Mammary epithelial cell (primary cell): ENCODE measurements at regions of chr11 and their contacts with region 1.

Region 1: DNA sequence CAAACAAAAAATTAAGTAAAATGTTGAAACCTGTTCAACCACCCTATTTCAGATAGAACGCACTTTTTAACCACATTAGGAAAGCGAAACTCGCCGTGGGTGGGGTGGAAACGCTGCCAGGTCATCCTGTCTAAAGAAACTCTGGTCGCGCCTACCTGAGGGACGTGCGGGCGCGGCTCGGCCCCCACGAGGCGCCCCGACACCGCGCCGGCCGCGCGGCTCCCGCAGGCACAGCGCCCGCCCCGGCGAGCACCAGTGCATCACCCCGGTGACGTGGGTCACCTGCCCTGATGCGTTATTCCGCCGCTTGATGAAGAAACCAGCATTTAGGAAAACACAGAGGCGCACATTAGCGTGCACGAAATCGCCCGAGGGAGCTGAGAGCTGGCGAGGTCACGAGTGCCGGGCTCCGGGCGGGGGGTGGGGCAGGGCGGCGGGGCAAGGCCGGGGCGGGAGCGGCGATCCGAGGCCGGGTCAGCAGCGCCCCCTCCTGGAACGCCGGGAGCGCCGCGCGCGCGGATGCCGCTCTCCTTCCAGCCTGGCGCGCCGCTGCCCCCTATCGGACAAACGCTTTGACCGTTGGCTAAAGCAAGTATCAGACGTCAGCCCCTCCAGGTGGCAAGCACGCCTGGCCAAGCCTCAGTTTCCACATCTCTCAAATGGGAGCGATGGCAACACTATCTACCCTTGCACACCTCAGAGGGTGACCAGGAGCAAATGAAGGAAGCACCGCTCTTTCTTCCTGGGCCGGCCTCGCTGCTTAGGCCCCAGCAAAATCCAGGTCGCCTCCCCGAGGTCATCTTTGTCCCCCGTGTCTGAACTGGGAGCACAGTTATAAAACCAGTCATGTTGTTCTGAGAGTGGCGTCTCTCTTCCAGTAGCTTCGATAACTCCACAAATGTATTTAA is 15.7 kb upstream of the SNX32 start:
- DNase-seq: peak; percentile 82
- H3K4me3 ChIP-seq: peak overlapping the region; percentile 61 to 70 (median 64)
- H3K27ac ChIP-seq: peak overlapping the region; percentile 85
- H3K4me1 ChIP-seq: peaks cover 7% of the 10 kb centered on the region
- H3K27me3 ChIP-seq: no peaks in the 10 kb centered on the region
- CTCF ChIP-seq: peak; percentile 88 to 97

Region 2: DNA sequence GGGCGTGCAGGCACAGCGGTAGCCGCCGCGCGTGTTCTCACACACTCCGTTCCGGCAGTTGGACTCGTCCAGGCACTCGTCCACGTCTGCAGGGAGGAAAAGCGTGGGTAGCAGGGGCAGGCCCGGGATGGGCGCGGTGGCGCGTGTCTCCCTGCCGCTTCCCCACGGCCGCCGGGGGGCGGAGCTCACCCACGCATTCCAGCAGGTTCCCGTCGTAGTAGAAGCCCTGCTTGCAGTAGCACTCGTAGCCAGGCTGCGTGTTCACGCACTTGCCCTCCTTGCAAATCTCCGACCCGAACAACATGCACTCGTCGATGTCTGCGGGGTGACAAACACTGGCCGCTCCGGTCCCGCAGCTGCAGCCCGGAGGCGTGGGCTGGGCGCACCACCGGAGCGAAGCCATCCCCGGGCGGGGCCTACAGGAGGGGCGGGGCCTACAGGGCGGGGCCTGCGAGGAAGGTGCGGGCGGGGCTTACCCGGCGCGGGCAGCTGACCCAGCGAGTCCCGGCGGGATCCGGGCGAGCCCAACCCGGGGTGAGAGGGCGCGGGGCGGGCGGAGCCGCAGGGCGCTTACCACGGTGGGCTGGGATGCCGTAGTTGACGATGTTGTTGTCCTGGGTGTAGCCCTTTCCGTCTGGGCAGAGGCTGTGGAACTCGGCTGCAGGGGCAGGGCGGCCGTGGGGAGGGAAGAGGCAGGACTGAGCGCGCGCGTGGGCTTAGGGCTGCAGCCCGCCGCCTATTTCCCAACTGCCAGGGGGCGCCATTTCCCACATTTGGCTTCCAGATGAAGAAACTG is 277.6 kb before region 1 on chr11:
- CTCF ChIA-PET with region 1: no interaction called
- dilution Hi-C with region 1: no loop called
- in situ Hi-C with region 1: no loop called
- intact Hi-C with region 1: loop called (anchors 1 kb)
- DNase-seq: peak; percentile 90
- H3K4me3 ChIP-seq: peak overlapping the region; percentile 53 to 55 (median 55)
- H3K27ac ChIP-seq: peak overlapping the region; percentile 44
- H3K4me1 ChIP-seq: peaks cover 27% of the 10 kb centered on the region
- H3K27me3 ChIP-seq: no peaks in the 10 kb centered on the region
- CTCF ChIP-seq: peak; percentile 43 to 95

Region 3: GRCh38 chr11:65711785-65712632 is 106.1 kb before region 1 on chr11 and contains the start of gene KAT5:
- CTCF ChIA-PET with region 1: interaction called, 25 read pairs
- dilution Hi-C with region 1: no loop called
- in situ Hi-C with region 1: loop called (anchors 5 to 10 kb)
- intact Hi-C with region 1: loop called (anchors 1 kb)
- DNase-seq: peak; percentile 97
- H3K4me3 ChIP-seq: peak within 1 kb of the TSS; percentile 56 to 80 (median 61)
- H3K27ac ChIP-seq: peak within 1 kb of the TSS; percentile 93
- H3K4me1 ChIP-seq: peaks cover 14% of the 10 kb centered on the region
- H3K27me3 ChIP-seq: no peaks in the 10 kb centered on the region
- CTCF ChIP-seq: peak; percentile 94 to 99
- total RNA-seq, gene KAT5: 26.5 to 49.9 TPM

Region 4: DNA sequence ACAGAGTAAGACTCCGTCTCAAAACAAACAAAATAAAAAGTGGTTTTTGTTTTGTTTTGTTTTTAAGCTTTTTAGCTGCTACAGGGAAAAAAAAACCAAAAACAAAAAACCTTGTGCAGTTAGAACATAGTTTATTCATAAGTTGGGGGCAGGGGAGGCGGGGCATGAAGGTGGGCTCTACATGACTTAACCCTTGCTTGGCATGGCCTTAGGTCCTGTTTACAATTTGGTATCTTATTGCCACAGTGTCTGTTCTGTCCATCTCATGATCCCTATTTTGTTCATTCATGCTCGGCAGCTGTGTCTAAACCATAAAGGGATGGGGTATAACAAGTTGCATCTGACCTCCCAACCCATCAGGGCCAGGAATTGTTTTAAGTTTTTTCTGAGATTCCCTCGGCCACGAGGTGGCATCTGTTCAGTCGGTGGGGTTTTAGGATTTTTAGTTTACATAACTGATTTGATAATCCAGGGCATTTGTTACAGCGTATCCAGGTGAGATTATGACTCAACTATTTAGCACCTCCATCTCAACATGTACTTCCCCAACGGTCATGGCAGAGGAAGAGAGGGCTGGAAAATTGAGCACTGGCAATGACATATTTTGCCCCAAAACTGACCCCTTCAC is 44.2 kb before region 1 on chr11:
- CTCF ChIA-PET with region 1: no interaction called
- dilution Hi-C with region 1: loop called (anchors 5 kb)
- in situ Hi-C with region 1: no loop called
- intact Hi-C with region 1: loop called (anchors 1 kb)
- DNase-seq: peak; percentile 38
- H3K4me3 ChIP-seq: no peak overlapping the region
- H3K27ac ChIP-seq: no peak overlapping the region
- H3K4me1 ChIP-seq: peaks cover 15% of the 10 kb centered on the region
- H3K27me3 ChIP-seq: no peaks in the 10 kb centered on the region
- CTCF ChIP-seq: peak; percentile 19 to 37

Region 5: GRCh38 chr11:65791691-65792213 is 26.3 kb before region 1 on chr11:
- CTCF ChIA-PET with region 1: interaction called, 4 read pairs
- dilution Hi-C with region 1: no loop called
- in situ Hi-C with region 1: no loop called
- intact Hi-C with region 1: loop called (anchors 2 kb)
- DNase-seq: peak; percentile 46
- H3K4me3 ChIP-seq: no peak overlapping the region
- H3K27ac ChIP-seq: peak overlapping the region; percentile 76
- H3K4me1 ChIP-seq: peaks cover 53% of the 10 kb centered on the region
- H3K27me3 ChIP-seq: no peaks in the 10 kb centered on the region
- CTCF ChIP-seq: no peak

Region 6: DNA sequence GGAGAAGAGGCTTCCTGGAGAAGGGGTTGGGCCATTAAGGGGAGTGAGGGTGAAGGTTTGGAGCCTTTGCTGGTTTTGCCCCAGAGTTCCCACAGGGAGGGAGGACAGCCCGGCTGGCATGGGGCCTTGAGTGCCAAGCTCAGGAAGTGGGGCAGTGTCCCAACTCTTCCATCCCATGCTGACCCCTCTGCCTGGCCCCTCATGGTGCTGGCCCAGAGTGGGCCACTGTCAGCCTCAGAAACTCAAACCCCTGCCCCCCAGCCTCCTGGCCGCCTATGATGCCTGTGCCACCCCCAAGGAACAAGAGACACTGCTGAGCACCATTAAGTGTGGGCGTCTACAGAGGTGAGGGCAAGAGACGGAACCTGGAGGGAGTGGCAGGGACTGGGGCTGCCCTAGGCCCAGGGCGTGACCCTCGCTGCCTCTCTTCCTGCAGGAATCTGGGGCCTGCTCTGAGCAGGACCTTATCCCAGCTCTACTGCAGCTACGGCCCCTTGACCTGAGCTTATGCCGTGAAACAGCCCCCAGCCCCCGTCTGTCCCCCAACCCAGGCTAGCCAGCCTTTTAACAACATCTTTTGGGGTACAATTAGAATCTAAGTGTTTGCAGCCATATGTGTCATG is 47.6 kb after region 1 on chr11:
- CTCF ChIA-PET with region 1: no interaction called
- dilution Hi-C with region 1: no loop called
- in situ Hi-C with region 1: no loop called
- intact Hi-C with region 1: no loop called
- DNase-seq: no peak
- H3K4me3 ChIP-seq: no peak overlapping the region
- H3K27ac ChIP-seq: no peak overlapping the region
- H3K4me1 ChIP-seq: peaks cover 9% of the 10 kb centered on the region
- H3K27me3 ChIP-seq: no peaks in the 10 kb centered on the region
- CTCF ChIP-seq: no peak